Ovary (tissue), 10 donors: ENCODE measurements at regions of chr11 and their contacts with region 1.

Region 1: DNA sequence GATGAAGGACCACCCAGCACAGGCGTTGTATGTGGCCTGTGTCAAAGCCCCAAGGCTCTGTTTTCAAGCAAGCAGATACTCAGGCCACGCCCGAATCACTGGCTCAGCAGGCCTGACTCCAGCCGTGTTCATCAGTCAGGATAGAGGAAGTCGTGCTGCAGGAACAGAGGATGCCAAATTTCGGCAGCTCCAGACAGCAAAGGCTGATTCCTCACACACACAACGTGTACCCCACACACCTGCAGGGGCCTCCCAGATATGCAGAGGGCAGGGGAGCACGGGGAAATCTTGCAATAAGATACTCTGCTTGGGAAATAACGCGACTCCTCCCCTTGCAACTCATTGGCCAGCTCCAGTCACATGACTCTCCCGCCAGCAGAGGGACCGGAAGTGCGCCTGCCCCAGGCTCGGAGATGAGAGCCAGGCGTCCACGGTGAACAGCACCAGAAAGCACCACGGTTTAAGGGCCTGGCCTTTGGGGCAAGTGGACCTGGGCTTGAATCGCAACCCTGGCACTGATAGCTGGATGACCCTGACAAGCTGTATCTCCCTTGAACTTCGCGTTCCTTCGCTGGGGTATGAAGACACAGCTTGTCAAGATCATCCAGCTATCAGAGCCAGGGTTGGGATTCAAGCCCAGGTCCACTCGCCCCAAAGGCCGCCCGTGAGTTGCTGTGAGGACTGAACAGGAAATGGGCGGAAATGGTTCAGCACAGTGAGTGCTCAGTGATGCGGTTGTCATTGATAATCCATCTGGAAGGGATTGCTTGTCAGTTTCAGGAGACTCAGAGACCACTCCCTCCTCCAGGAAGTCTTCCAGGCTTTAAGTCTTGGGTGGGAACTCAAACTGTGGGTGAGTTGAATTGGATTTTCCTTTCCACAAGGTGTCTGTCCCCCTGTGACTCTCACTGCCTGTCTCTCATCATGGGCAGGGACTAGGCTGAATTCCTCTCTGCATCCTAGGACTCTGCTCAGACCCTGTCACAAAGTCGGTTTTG is 88.5 kb downstream of the MYEOV start:
- DNase-seq: peak in 3 of 5 donors; percentile 22 to 40 (median 34)
- H3K4me3 ChIP-seq: no peak overlapping the region
- H3K27ac ChIP-seq: no peak overlapping the region
- H3K4me1 ChIP-seq: no peaks in the 10 kb centered on the region
- H3K27me3 ChIP-seq: no peaks in the 10 kb centered on the region
- CTCF ChIP-seq: no peak
- EP300 ChIP-seq: no peak
- POLR2A ChIP-seq: no peak

Region 2: DNA sequence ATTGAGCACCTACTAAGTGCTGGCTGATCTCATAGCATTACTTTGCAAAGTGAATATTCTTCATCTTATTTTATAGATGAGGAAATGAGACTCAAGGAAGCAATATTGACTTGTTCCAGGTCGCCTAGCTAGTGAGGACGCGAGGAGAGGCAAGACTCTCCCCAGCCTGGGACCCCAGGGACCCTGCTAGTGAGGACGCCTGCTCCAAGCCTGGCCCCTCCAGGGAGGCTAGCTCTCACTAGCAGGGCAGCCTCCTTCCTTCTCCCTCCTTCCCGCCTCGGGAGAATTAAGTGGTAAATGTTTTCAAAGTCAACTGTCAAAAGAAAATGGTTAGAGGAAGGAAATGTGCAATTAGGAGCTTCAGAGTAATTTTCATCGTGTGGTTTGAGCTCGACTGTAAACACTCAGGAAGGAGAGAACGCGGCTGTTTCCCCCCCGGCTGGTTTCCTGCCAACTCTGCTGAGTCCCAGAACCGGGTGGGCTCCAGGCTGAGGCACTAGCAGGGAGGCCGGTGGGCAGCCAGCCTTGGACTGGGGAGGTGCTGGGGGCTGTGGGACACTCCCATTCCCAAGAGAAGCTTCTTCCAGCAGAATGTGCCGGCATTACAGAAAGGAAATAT is 70.6 kb before region 1 on chr11:
- intact Hi-C with region 1: loop called in 1 of 4 experiments (anchors 10 kb)
- DNase-seq: peak in 1 of 5 donors; percentile 11
- H3K4me3 ChIP-seq: no peak overlapping the region
- H3K27ac ChIP-seq: no peak overlapping the region
- H3K4me1 ChIP-seq: no peaks in the 10 kb centered on the region
- H3K27me3 ChIP-seq: no peaks in the 10 kb centered on the region
- CTCF ChIP-seq: no peak
- EP300 ChIP-seq: no peak
- POLR2A ChIP-seq: no peak